ENCODE measurements at regions of chr4 and their contacts with region 1.

Region 1: GRCh38 chr4:58807843-58808630 is 1697.9 kb upstream of the IGFBP7 start:
- DNase-seq: peak; percentile 94
- ATAC-seq: peak; percentile 72
- H3K4me3 ChIP-seq: no peak overlapping the region
- H3K27ac ChIP-seq: peak overlapping the region; percentile 95
- H3K4me1 ChIP-seq: peaks cover 39% of the 10 kb centered on the region
- H3K27me3 ChIP-seq: no peaks in the 10 kb centered on the region
- CTCF ChIP-seq: no peak

Region 2: GRCh38 chr4:58711039-58711438 is 97.0 kb before region 1 on chr4:
- CTCF ChIA-PET with region 1: no interaction called
- POLR2A ChIA-PET with region 1: no interaction called
- intact Hi-C with region 1: no loop called
- DNase-seq: no peak
- ATAC-seq: no peak
- H3K4me3 ChIP-seq: no peak overlapping the region
- H3K27ac ChIP-seq: no peak overlapping the region
- H3K4me1 ChIP-seq: no peaks in the 10 kb centered on the region
- H3K27me3 ChIP-seq: no peaks in the 10 kb centered on the region
- CTCF ChIP-seq: no peak

Region 3: DNA sequence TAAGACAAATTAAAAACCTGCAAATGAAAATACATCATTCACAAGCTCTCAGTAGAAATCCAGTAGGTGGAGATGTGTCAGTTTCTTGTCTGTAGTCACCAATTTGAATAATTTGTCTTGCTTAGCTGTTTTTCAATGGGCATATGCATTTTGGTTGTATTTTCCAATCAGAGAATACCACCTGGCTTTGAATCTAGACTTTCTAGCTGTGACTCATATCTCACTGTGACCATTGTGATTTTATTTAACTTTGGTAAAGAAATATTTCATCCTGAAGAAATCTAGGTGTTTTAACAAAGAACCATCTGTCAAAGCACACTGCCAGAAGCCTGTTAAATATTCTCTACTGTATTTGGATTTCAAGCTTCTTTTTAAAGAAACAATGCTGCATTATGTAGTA is 47.3 kb before region 1 on chr4:
- CTCF ChIA-PET with region 1: no interaction called
- POLR2A ChIA-PET with region 1: no interaction called
- intact Hi-C with region 1: loop called (anchors 5 kb)
- DNase-seq: peak; percentile 77
- ATAC-seq: peak; percentile 83
- H3K4me3 ChIP-seq: no peak overlapping the region
- H3K27ac ChIP-seq: peak overlapping the region; percentile 41
- H3K4me1 ChIP-seq: peaks cover 19% of the 10 kb centered on the region
- H3K27me3 ChIP-seq: no peaks in the 10 kb centered on the region
- CTCF ChIP-seq: no peak; the same call in none of the 2 replicates

Region 4: DNA sequence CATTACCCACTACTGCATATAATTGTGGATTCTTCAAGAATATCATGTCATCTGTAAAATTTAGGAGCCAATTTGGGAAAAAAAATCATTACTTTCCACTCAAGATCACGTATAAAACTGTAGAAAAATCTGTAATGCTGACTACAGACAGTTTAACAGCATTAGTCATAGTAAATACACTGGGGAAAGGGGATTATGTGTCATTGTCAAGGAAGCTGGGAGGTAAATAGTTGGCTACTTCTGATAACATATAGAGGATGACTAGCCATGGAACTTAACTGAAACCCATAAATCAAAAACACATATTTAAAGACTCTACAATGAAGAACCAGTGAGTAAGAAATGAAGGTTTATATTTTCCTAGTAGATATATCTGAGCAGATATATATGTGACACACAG is 31.4 kb before region 1 on chr4:
- CTCF ChIA-PET with region 1: no interaction called
- POLR2A ChIA-PET with region 1: no interaction called
- intact Hi-C with region 1: loop called (anchors 1 kb)
- DNase-seq: peak; percentile 92
- ATAC-seq: peak; percentile 99
- H3K4me3 ChIP-seq: peak overlapping the region; percentile 14; the same call in 1 of the 2 replicates
- H3K27ac ChIP-seq: peak overlapping the region; percentile 87
- H3K4me1 ChIP-seq: peaks cover 28% of the 10 kb centered on the region
- H3K27me3 ChIP-seq: no peaks in the 10 kb centered on the region
- CTCF ChIP-seq: no peak

Region 5: GRCh38 chr4:58833126-58833525 is 25.1 kb after region 1 on chr4:
- CTCF ChIA-PET with region 1: no interaction called
- POLR2A ChIA-PET with region 1: no interaction called
- intact Hi-C with region 1: loop called (anchors 2 kb)
- DNase-seq: no peak
- ATAC-seq: no peak
- H3K4me3 ChIP-seq: no peak overlapping the region
- H3K27ac ChIP-seq: no peak overlapping the region
- H3K4me1 ChIP-seq: no peaks in the 10 kb centered on the region
- H3K27me3 ChIP-seq: no peaks in the 10 kb centered on the region
- CTCF ChIP-seq: no peak

Region 6: GRCh38 chr4:58849026-58849425 is 41.0 kb after region 1 on chr4:
- CTCF ChIA-PET with region 1: no interaction called
- POLR2A ChIA-PET with region 1: no interaction called
- intact Hi-C with region 1: loop called (anchors 1 kb)
- DNase-seq: peak; percentile 68
- ATAC-seq: peak; percentile 45
- H3K4me3 ChIP-seq: no peak overlapping the region
- H3K27ac ChIP-seq: no peak overlapping the region
- H3K4me1 ChIP-seq: no peaks in the 10 kb centered on the region
- H3K27me3 ChIP-seq: no peaks in the 10 kb centered on the region
- CTCF ChIP-seq: no peak

Region 7: GRCh38 chr4:59091146-59092142 is 283.4 kb after region 1 on chr4:
- CTCF ChIA-PET with region 1: no interaction called
- POLR2A ChIA-PET with region 1: no interaction called
- intact Hi-C with region 1: no loop called
- DNase-seq: peak; percentile 21
- ATAC-seq: peak; percentile 38
- H3K4me3 ChIP-seq: no peak overlapping the region
- H3K27ac ChIP-seq: no peak overlapping the region
- H3K4me1 ChIP-seq: no peaks in the 10 kb centered on the region
- H3K27me3 ChIP-seq: no peaks in the 10 kb centered on the region
- CTCF ChIP-seq: no peak

Region 8: DNA sequence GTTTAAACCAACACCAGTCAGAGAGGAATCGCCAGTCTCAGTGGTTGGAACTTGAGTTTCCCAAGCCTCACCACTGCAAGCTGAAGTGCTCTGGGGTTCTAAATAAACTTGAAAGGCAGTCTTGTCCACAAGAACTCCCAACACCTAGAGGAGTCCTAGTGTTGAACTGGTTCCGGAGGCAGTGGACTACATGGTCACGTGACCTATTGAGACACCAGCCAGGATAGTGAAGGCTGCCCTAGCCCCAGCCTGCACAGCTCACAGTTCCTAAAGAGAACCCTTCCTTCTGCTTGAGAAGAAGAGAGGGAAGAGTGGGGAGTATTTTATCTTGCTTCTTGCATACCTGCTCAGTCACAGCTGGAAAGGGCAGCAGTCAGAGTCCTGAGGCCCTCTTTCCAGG is 1379.4 kb after region 1 on chr4:
- CTCF ChIA-PET with region 1: no interaction called
- POLR2A ChIA-PET with region 1: no interaction called
- intact Hi-C with region 1: no loop called
- DNase-seq: no peak
- ATAC-seq: no peak
- H3K4me3 ChIP-seq: no peak overlapping the region
- H3K27ac ChIP-seq: no peak overlapping the region
- H3K4me1 ChIP-seq: no peaks in the 10 kb centered on the region
- H3K27me3 ChIP-seq: no peaks in the 10 kb centered on the region
- CTCF ChIP-seq: no peak

Measured in PC-3 (cell line).